Activated CD4-positive, alpha-beta T cell treated with anti-CD3 and anti-CD28 coated beads for 36 hours (primary cell): ENCODE measurements at regions of chr21 and their contacts with region 1.

Region 1: DNA sequence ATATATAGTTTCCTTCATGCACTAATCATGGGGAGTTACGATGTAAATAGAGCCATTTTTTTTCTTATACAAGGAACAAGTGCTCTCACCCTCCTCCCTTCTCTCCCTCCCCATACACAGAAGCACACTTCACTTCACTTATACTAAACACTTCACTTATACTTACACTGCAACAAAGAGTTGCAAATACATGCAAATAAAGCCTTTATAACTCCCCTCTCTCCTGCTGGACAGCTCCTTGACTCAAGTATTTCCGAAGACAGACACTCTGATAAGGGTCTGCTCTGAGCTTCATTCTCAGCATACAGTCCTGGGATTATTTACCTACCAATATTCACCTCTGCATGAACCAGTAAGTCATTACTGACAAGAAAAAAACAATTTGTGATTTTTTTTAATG is 35.6 kb upstream of the ERG start:
- DNase-seq: no peak
- ATAC-seq: no peak
- H3K4me3 Mint-ChIP-seq: no peak overlapping the region
- H3K27ac Mint-ChIP-seq: no peak overlapping the region
- H3K4me1 Mint-ChIP-seq: no peaks in the 10 kb centered on the region
- H3K27me3 Mint-ChIP-seq: no peaks in the 10 kb centered on the region

Region 2: DNA sequence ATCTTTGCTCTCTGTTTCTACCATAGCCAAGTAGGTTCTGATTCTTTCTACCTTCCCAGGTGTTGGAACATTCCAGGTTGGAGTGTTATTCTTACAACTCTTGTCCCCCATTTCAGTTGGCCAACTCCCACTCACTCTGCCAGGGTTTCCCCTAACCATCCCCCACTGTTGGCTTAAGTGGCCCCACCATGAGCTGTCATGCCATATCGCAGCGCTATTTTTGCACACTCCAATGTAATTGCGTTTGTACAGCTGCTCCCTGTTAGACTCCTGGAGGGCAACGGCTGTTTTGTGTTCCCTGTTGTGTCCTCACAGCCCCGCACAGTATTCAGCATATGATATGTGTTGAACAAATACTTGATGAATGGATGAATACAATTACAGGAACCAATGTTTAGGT is 154.2 kb after region 1 on chr21:
- CTCF ChIA-PET with region 1: no interaction called
- POLR2A ChIA-PET with region 1: interaction called, 12 read pairs
- intact Hi-C with region 1: no loop called
- DNase-seq: no peak
- ATAC-seq: no peak
- H3K4me3 Mint-ChIP-seq: no peak overlapping the region
- H3K27ac Mint-ChIP-seq: no peak overlapping the region
- H3K4me1 Mint-ChIP-seq: no peaks in the 10 kb centered on the region
- H3K27me3 Mint-ChIP-seq: peaks cover 18% of the 10 kb centered on the region